Activated CD8-positive, alpha-beta T cell treated with anti-CD3 and anti-CD28 coated beads, Interleukin-2, amount 10 ng/mL, durations not matched to agents 7 days and 5 days (primary cell): ENCODE measurements at regions of chr3 and their contacts with region 1.

Region 1: GRCh38 chr3:184229394-184230080 is at the start of gene VWA5B2:
- DNase-seq: peak; percentile 74
- ATAC-seq: peak; percentile 97
- H3K4me3 Mint-ChIP-seq: peak within 1 kb of the TSS; percentile 37
- H3K27ac Mint-ChIP-seq: no peak within 1 kb of the TSS
- H3K4me1 Mint-ChIP-seq: peaks cover 9% of the 10 kb centered on the region
- H3K27me3 Mint-ChIP-seq: peaks cover 48% of the 10 kb centered on the region
- total RNA-seq, gene VWA5B2: not detected

Region 2: DNA sequence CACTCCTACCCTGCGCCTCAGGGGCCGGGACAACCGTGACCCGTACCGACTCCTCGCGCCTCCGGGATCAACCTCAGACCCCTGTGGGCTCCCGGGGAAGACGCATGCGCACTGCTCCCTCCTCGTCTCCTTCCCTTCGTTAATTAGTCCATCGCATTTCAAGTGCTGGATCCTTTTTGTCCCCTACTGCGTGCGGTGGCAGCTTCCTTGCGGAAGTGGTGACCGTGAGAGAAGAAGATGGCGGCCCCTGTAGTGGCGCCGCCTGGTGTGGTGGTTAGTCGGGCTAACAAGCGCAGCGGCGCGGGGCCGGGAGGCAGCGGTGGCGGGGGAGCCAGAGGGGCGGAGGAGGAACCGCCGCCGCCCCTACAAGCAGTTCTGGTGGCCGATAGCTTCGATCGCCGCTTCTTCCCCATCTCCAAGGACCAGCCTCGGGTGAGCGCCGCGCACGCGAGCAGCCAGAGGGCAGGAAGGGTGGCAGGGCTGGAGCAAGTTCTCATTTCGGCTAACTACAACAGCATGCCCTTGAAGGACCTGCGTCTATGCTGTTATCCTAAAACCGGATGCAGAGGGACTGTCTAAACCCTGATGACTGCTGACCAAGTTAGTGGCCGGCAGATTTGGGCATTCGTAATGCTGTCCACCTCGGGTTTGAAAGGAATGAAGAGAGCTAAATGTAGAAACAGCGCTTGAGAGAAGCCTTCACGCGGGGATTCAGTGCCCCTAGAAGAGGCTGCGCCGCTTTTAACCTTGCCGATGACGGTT is 94.2 kb before region 1 on chr3 and contains the start of gene EIF2B5:
- CTCF ChIA-PET with region 1: interaction called, 11 read pairs
- POLR2A ChIA-PET with region 1: no interaction called
- DNase-seq: peak; percentile 90
- ATAC-seq: peak; percentile 92
- H3K4me3 Mint-ChIP-seq: peak within 1 kb of the TSS; percentile 87
- H3K27ac Mint-ChIP-seq: peak within 1 kb of the TSS; percentile 88
- H3K4me1 Mint-ChIP-seq: peaks cover 30% of the 10 kb centered on the region
- H3K27me3 Mint-ChIP-seq: no peaks in the 10 kb centered on the region
- total RNA-seq, gene EIF2B5: 55.1 to 55.4 TPM

Region 3: GRCh38 chr3:184218814-184219213 is 10.7 kb before region 1 on chr3:
- CTCF ChIA-PET with region 1: interaction called, 32 read pairs
- POLR2A ChIA-PET with region 1: no interaction called
- DNase-seq: no peak
- ATAC-seq: no peak
- H3K4me3 Mint-ChIP-seq: no peak overlapping the region
- H3K27ac Mint-ChIP-seq: no peak overlapping the region
- H3K4me1 Mint-ChIP-seq: no peaks in the 10 kb centered on the region
- H3K27me3 Mint-ChIP-seq: peaks cover 11% of the 10 kb centered on the region

Region 4: DNA sequence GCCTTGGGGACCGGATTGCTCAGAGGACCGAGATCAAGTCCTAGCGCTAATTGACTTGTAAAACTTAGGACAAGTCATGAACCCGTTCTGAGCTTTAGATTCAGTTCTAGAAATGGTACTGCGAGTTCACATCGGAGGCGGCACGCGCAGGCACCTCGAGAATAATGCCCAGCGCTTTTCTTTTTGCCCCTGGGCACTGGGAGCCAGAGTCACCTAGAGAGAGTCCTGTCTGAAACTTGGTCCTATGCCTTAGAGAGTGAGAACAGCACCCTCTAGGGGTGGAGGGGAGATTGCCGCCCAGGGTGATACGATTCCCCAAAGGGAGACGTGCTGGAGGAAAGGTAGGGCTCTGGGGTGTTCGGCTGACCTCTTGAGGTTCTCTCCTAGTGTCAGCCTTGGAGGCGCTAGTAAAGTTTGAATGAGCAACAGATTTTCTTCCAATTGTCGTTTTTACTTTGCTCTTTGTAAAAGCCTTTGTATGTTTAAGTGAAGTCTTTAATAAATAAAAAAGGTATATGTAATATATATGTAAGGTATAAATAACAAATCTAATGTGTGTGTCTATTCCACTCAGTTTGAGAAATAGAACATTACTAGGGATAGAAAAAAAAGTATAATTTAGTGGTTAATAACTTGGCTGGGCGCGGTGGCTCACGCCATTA is 20.8 kb after region 1 on chr3:
- CTCF ChIA-PET with region 1: interaction called, 45 read pairs
- POLR2A ChIA-PET with region 1: interaction called, 5 read pairs
- DNase-seq: peak; percentile 94
- ATAC-seq: peak; percentile 71
- H3K4me3 Mint-ChIP-seq: peak overlapping the region; percentile 82
- H3K27ac Mint-ChIP-seq: peak overlapping the region; percentile 93
- H3K4me1 Mint-ChIP-seq: peaks cover 12% of the 10 kb centered on the region
- H3K27me3 Mint-ChIP-seq: no peaks in the 10 kb centered on the region

Region 5: DNA sequence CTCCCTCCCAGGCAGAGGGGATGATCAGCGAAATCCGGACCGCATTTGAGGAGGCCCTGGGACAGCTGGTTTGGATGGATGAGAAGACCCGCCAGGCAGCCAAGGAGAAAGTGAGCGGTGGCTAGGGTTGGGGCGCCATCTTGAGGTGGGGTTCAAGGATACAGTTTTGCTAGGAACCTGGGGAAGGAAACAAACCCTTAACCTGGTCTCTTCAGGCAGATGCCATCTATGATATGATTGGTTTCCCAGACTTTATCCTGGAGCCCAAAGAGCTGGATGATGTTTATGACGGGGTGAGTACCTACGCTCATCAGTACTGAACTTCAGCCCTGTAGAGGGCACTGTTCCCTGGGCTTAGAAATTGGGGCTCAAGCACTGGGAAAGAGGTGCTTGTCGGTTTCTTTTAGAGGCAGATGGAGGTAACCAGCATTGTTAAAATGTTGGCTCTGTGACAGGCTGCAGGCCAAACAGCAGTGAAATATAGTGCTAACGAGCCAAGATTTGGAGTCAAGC is 59.9 kb after region 1 on chr3:
- CTCF ChIA-PET with region 1: interaction called, 33 read pairs
- POLR2A ChIA-PET with region 1: no interaction called
- DNase-seq: peak; percentile 77
- ATAC-seq: peak; percentile 77
- H3K4me3 Mint-ChIP-seq: no peak overlapping the region
- H3K27ac Mint-ChIP-seq: no peak overlapping the region
- H3K4me1 Mint-ChIP-seq: peaks cover 2% of the 10 kb centered on the region
- H3K27me3 Mint-ChIP-seq: peaks cover 8% of the 10 kb centered on the region

Region 6: DNA sequence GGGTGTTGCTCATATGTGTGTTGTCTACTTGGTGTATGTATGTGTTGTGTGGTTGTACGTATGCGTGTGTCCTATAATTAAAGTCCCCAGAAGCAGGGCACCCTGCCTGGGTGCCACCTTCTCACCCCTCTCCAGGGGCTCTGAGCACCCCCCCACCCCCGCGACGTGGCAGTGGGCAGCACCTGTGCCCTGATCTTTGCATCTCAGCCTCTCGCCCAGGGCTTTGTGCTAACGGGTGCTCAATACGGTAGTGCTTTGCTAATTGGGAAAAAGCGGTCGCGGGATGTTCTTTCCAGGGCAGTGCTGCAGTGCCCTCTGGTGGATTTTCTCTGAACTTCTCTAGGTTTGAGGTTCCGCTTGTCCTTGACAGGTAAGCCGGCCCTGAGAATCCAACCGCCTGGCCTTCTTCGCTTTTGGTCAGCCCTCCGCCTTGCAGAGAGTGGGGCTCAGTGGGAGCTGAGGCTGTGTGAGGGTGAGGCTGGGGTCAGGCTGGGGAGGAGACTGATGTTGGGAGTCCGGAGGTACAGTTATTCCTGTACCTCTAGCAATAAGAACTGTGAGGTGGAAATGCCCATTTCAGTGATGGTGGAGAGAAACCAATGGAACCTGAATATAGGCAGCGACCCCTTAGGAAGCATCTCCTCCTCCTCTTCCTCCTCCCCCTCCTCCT is 314.4 kb after region 1 on chr3:
- CTCF ChIA-PET with region 1: no interaction called
- POLR2A ChIA-PET with region 1: no interaction called
- DNase-seq: peak; percentile 85
- ATAC-seq: peak; percentile 80
- H3K4me3 Mint-ChIP-seq: no peak overlapping the region
- H3K27ac Mint-ChIP-seq: no peak overlapping the region
- H3K4me1 Mint-ChIP-seq: peaks cover 5% of the 10 kb centered on the region
- H3K27me3 Mint-ChIP-seq: peaks cover 24% of the 10 kb centered on the region

Region 7: GRCh38 chr3:184696697-184697096 is 467.2 kb after region 1 on chr3:
- CTCF ChIA-PET with region 1: no interaction called
- POLR2A ChIA-PET with region 1: no interaction called
- DNase-seq: no peak
- ATAC-seq: no peak
- H3K4me3 Mint-ChIP-seq: no peak overlapping the region
- H3K27ac Mint-ChIP-seq: no peak overlapping the region
- H3K4me1 Mint-ChIP-seq: no peaks in the 10 kb centered on the region
- H3K27me3 Mint-ChIP-seq: peaks cover 13% of the 10 kb centered on the region